Heart left ventricle (tissue), 16 donors: ENCODE measurements at regions of chr11 and their contacts with region 1.

Region 1: GRCh38 chr11:128552783-128553661 is 34.3 kb downstream of the ETS1 start:
- DNase-seq: no peak
- ATAC-seq: peak in 2 of 4 donors; percentile 20 to 45
- H3K4me3 ChIP-seq: peak overlapping the region in 1 of 12 donors; percentile 8
- H3K27ac ChIP-seq: peak overlapping the region in 10 of 12 donors; percentile 6 to 63 (median 38)
- H3K4me1 ChIP-seq: peaks cover 0 to 66% (median 31%) of the 10 kb centered on the region in 12 donors
- H3K27me3 ChIP-seq: no peaks in the 10 kb centered on the region
- CTCF ChIP-seq: no peak
- POLR2A ChIP-seq: no peak

Region 2: GRCh38 chr11:128172046-128172878 is 380.8 kb before region 1 on chr11:
- intact Hi-C with region 1: loop called in 2 of 10 experiments (anchors 10 kb)
- DNase-seq: peak; percentile 74 to 83 (median 80)
- ATAC-seq: peak in 3 of 4 donors; percentile 77 to 85 (median 84)
- H3K4me3 ChIP-seq: no peak overlapping the region
- H3K27ac ChIP-seq: peak overlapping the region in 1 of 12 donors; percentile 19
- H3K4me1 ChIP-seq: peaks cover 0 to 8% (median 0%) of the 10 kb centered on the region in 12 donors
- H3K27me3 ChIP-seq: peaks cover 0 to 7% (median 0%) of the 10 kb centered on the region in 9 donors
- CTCF ChIP-seq: peak; percentile 50 to 91 (median 80)
- POLR2A ChIP-seq: no peak

Region 3: GRCh38 chr11:128506999-128507611 is 45.9 kb before region 1 on chr11:
- intact Hi-C with region 1: loop called in 1 of 10 experiments (anchors 5 kb)
- DNase-seq: peak; percentile 69 to 91 (median 83)
- ATAC-seq: peak; percentile 79 to 96 (median 88)
- H3K4me3 ChIP-seq: peak overlapping the region in 11 of 12 donors; percentile 4 to 47 (median 37)
- H3K27ac ChIP-seq: peak overlapping the region; percentile 60 to 96 (median 80)
- H3K4me1 ChIP-seq: peaks cover 24 to 100% (median 100%) of the 10 kb centered on the region in 12 donors
- H3K27me3 ChIP-seq: no peaks in the 10 kb centered on the region
- CTCF ChIP-seq: no peak
- POLR2A ChIP-seq: peak in 1 of 2 donors; percentile 75

Region 4: GRCh38 chr11:128522055-128522942 is 30.7 kb before region 1 on chr11:
- intact Hi-C with region 1: loop called in 4 of 10 experiments (anchors 1 to 2 kb)
- DNase-seq: peak; percentile 95 to 97 (median 96)
- ATAC-seq: peak; percentile 93 to 99 (median 96)
- H3K4me3 ChIP-seq: peak overlapping the region; percentile 63 to 93 (median 83)
- H3K27ac ChIP-seq: peak overlapping the region; percentile 94 to 98 (median 96)
- H3K4me1 ChIP-seq: peaks cover 8 to 74% (median 42%) of the 10 kb centered on the region in 12 donors
- H3K27me3 ChIP-seq: no peaks in the 10 kb centered on the region
- CTCF ChIP-seq: peak in 1 of 12 donors; percentile 5
- POLR2A ChIP-seq: peak; percentile 79 to 97

Region 5: DNA sequence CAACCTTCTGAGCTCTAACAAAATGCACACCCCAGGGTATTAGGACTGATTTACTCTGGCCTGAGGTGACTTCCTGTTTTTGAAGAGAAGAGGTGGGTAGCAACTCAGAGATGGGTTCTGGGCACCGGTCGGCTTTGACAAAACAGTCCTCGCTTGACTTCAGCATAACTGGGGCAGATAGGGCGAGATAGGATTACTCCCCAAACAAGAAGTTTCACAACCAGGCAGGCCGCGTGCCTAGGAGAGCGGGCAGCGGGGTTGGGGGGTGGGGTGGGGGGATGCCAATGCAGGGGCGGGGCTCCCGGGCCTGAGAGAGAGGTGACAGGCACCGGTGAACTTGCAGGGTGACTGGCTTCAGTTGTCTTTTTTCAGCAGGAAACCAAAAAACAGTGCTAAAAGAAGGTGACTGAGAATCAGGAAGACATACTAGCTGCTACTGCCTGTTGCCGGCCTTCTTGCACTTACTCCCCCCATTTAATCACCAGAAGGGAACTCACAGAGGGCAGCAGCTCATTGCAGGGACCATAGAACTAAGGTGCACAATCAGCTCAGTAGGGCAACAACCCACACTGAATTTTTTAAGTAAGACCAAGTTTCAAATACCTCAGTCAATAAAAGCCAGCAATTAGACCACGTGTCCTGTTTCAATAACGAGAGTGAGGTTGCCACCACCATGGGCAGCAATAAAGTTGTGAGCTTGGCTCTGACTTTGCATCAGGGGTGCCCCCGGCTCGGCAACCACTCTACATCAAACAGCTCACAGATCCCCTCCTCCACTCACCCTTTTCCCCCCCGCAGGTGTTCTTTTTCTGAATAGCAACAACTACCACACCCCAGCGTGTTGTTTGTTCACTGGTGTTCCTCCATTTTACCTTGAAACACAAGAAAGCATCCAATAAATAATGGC is 71.5 kb after region 1 on chr11:
- intact Hi-C with region 1: loop called in 6 of 10 experiments (anchors 2 to 10 kb)
- DNase-seq: no peak
- ATAC-seq: no peak
- H3K4me3 ChIP-seq: no peak overlapping the region
- H3K27ac ChIP-seq: peak overlapping the region in 1 of 12 donors; percentile 81
- H3K4me1 ChIP-seq: peaks cover 0 to 76% (median 14%) of the 10 kb centered on the region in 12 donors
- H3K27me3 ChIP-seq: no peaks in the 10 kb centered on the region
- CTCF ChIP-seq: no peak
- POLR2A ChIP-seq: no peak